CD14-positive monocyte (primary cell): ENCODE measurements at regions of chr1 and their contacts with region 1.

Region 1: DNA sequence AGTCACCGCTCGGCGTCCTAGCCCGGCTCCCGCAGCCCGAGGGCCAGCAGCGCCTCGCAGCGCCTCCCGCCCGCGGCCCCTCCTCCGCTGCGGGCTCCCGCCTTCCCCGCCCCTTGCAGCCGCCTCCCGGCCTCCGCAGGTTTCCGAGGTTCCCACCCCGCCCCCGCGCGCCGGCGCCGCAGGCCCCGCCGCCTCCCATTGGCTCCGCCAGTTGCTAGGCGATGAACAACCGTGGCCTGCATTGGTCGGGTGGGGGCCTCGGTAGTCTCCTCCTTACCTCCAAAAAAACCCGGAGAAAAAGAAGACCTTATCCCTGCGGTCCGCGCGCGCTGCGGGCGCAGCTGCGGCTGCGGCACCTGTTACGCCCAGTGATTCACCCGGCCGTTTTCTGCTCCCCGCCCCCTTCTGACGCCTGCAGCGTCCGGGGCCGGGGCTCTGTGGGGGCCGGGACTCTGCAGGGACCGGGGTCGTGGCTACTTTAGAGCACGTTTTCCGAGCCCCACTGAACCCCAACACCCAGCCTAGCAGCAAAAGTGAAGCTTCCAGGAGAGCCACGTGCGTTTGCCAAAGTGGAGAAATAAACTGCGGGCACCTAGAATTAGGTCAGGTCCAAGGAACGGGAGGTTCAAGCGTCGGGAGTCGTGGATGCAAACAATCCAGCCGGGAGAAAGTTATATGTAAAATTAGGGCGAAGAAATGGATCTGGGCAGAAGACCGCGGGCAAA is at the start of gene SSX2IP:
- DNase-seq: peak; percentile 94 to 96 (median 94)
- H3K4me3 ChIP-seq: peak within 1 kb of the TSS; percentile 59 to 91 (median 81)
- H3K4me3 Mint-ChIP-seq: peak within 1 kb of the TSS; percentile 89 to 95
- H3K27ac ChIP-seq: peak within 1 kb of the TSS; percentile 53 to 70
- H3K27ac Mint-ChIP-seq: peak within 1 kb of the TSS; percentile 76 to 94 (median 88)
- H3K4me1 ChIP-seq: peaks cover 29 to 40% of the 10 kb centered on the region in 2 donors
- H3K4me1 Mint-ChIP-seq: peaks cover 40% of the 10 kb centered on the region
- H3K27me3 ChIP-seq: no peaks in the 10 kb centered on the region
- H3K27me3 Mint-ChIP-seq: peaks cover 0 to 3% (median 0%) of the 10 kb centered on the region in 3 donors
- CTCF ChIP-seq: no peak
- polyA plus RNA-seq, gene SSX2IP: 0.85 to 2.8 (median 2.2) TPM

Region 2: DNA sequence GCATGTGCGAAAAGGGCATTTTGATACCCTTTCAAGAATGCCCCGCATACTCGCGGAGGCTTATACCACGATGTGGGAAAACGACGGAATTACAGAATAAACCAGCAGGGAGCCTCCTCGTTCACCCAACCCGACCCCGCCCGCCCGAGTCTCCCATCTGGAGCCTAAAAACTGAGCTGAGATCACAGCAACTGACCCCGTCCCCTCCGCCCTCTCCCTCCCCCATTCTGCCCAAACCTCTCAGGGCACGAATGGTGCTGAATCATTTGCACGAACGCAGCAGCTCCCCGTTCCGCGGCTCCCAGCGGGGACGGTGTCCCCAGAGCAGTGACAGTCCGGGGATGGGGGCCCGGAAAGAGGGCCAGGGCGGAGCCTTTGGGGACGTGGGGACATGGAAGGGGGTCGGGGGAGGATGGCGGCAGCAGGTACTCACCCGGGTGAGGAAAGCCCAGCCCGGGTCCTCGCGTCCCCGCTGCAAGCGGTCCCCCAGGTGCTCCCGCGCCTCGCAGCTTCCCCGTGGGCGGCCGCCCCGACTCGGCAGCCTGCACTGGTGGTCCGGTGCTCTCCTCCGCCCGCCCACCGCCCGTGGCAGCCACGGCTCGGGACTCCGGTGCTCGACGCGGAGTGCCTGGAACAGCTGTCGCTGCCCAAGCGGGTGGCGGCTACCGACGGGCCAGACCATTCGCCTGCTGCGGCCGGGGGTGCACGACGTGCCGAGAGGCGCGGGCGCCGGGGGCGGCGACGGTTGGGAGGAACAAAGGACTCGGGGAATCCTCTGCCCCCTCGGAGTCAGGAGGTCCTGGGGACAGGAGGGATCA is 691.9 kb before region 1 on chr1 and contains the start of gene TTLL7:
- intact Hi-C with region 1: no loop called
- DNase-seq: peak; percentile 30 to 46 (median 32)
- H3K4me3 ChIP-seq: peak within 1 kb of the TSS; percentile 53 to 81 (median 57)
- H3K4me3 Mint-ChIP-seq: peak within 1 kb of the TSS; percentile 81 to 89
- H3K27ac ChIP-seq: peak within 1 kb of the TSS in 1 of 2 donors; percentile 47
- H3K27ac Mint-ChIP-seq: peak within 1 kb of the TSS in 5 of 7 donors; percentile 22 to 86 (median 62)
- H3K4me1 ChIP-seq: peaks cover 5% of the 10 kb centered on the region in 2 donors
- H3K4me1 Mint-ChIP-seq: peaks cover 13% of the 10 kb centered on the region
- H3K27me3 ChIP-seq: peaks cover 31 to 41% of the 10 kb centered on the region in 2 donors
- H3K27me3 Mint-ChIP-seq: peaks cover 38 to 50% (median 45%) of the 10 kb centered on the region in 3 donors
- CTCF ChIP-seq: no peak
- polyA plus RNA-seq, gene TTLL7: 0.12 to 0.69 TPM in 2 of 3 donors, not detected in the other

Region 3: DNA sequence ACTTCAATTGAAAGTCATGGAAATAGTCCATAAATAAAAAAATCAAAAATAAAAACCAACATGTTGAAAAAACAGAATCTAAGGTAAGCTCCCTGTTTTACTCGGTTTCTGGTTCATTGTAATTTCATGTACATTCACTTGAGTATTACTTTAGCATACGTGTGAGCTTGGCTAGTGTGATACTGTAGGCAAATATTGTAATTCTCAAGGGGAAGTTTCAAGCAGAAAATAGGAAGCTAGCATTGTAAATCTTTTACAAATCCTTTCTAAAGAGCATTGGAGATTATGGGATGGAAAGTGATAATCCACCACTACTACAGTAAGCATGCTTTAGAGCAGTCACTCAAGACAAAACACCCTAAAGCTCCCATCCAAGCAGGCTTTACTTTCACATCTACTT is 205.7 kb after region 1 on chr1:
- intact Hi-C with region 1: no loop called
- DNase-seq: no peak
- H3K4me3 ChIP-seq: no peak overlapping the region
- H3K4me3 Mint-ChIP-seq: no peak overlapping the region
- H3K27ac ChIP-seq: no peak overlapping the region
- H3K27ac Mint-ChIP-seq: no peak overlapping the region
- H3K4me1 ChIP-seq: peaks cover 9 to 13% of the 10 kb centered on the region in 2 donors
- H3K4me1 Mint-ChIP-seq: peaks cover 10% of the 10 kb centered on the region
- H3K27me3 ChIP-seq: peaks cover 39 to 44% of the 10 kb centered on the region in 2 donors
- H3K27me3 Mint-ChIP-seq: peaks cover 40 to 59% (median 42%) of the 10 kb centered on the region in 3 donors
- CTCF ChIP-seq: no peak

Region 4: DNA sequence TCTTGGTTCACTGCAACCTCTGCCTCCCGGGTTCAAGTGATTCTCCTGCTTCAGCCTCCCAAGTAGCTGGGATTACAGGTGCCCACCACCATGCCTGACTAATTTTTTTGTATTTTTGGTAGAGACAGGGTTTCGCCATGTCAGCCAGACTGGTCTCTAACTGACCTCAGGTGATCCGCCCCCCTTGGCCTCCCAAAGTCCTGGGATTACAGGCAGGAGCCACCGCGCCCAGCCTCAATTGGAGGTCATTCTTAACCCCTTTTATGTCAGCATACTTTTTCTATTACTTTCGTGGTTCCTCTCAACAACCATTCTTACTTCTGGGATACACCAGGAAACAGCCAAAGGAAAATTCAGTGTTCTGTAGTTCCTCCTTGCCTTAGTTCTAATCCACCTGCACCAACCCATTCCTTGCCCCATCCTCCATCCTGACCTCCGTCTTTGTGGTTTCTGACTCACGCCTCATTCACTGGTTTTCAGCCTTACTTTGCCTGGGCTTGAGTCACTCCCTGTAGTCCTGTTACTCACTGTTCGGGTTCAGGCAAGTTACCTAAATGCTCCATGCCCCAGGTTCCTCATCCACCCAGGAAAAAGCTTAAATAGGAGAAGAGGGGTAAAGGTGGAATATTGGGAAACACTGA is 598.8 kb after region 1 on chr1:
- intact Hi-C with region 1: loop called in 1 of 2 experiments (anchors 10 kb)
- DNase-seq: peak in 2 of 3 donors; percentile 15 to 72
- H3K4me3 ChIP-seq: no peak overlapping the region
- H3K4me3 Mint-ChIP-seq: no peak overlapping the region
- H3K27ac ChIP-seq: no peak overlapping the region
- H3K27ac Mint-ChIP-seq: no peak overlapping the region
- H3K4me1 ChIP-seq: no peaks in the 10 kb centered on the region
- H3K4me1 Mint-ChIP-seq: no peaks in the 10 kb centered on the region
- H3K27me3 ChIP-seq: no peaks in the 10 kb centered on the region
- H3K27me3 Mint-ChIP-seq: peaks cover 0 to 7% (median 5%) of the 10 kb centered on the region in 3 donors
- CTCF ChIP-seq: no peak